HEK293 (cell line): ENCODE measurements at regions of chr4 and their contacts with region 1.

Region 1: DNA sequence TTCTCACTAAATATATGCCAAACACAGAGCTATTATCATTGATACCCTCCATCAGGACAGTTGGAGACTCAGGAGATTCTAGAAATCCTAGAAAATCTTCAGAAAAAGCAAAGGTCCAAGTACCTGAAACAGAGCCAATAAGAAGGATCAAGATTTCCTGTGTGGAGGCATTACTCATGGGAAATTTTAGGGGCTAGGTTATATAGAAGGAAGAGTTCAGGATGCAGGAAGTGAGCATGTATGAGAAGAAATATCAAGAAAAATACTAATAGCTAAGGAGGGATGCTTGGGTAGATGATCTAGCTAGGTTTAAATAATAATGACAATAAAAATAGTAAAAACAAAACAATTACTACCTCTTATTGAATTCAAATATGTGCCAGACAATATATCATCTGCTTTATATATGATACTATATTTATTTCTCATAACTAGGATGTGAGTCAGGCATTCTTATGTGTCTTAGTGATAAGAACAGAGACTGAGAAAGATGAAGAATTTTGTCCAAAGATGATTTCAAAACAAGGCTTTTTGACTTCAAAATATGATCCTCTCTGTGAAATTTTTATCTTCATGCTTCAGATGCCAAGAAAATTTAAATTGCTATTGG is 66.4 kb upstream of the HHIP start:
- H3K4me3 ChIP-seq: no peak overlapping the region
- H3K27ac ChIP-seq: no peak overlapping the region
- H3K4me1 ChIP-seq: no peaks in the 10 kb centered on the region
- CTCF ChIP-seq: no peak

Region 2: DNA sequence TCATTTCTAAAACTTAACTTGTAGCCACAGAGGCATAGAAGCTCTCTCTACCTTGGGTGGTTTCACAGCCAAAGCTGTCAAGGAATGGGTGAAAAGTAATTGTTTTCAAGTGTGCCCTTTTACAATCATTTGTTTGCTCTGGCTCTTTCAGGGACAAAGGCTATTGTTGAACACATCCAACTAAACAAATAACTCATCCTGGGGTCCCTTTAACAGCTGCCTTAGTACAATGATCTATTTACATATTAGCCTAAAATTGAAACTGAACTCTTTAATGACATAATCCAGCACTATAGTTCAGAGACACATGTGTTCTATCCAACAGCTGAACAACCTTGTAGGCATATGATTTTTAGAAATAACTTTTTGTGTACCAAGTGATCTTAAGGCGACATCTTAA is 70.1 kb after region 1 on chr4:
- CTCF ChIA-PET with region 1: interaction called, 10 read pairs
- POLR2A ChIA-PET with region 1: no interaction called
- H3K4me3 ChIP-seq: no peak overlapping the region
- H3K27ac ChIP-seq: no peak overlapping the region
- H3K4me1 ChIP-seq: no peaks in the 10 kb centered on the region; the same call in 1 of the 2 replicates
- CTCF ChIP-seq: no peak